ENCODE measurements at regions of chr1 and their contacts with region 1.

Region 1: GRCh38 chr1:161132410-161133219 is at the start of gene DEDD:
- DNase-seq: peak; percentile 97
- H3K4me3 ChIP-seq: peak within 1 kb of the TSS; percentile 90 to 100 (median 94)
- H3K27ac ChIP-seq: peak within 1 kb of the TSS; percentile 85
- H3K4me1 ChIP-seq: peaks cover 26% of the 10 kb centered on the region
- H3K27me3 ChIP-seq: no peaks in the 10 kb centered on the region
- CTCF ChIP-seq: peak; percentile 1 to 4
- POLR2A ChIP-seq: no peak
- total RNA-seq, gene DEDD: 50.2 and 54.9 TPM in 2 replicates

Region 2: GRCh38 chr1:161153679-161154426 is 21.2 kb after region 1 on chr1 and contains the start of gene UFC1:
- CTCF ChIA-PET with region 1: interaction called, 14 read pairs
- POLR2A ChIA-PET with region 1: interaction called, 11 read pairs
- dilution Hi-C with region 1: no loop called
- intact Hi-C with region 1: no loop called
- DNase-seq: peak; percentile 91
- H3K4me3 ChIP-seq: peak within 1 kb of the TSS; percentile 24 to 77 (median 52)
- H3K27ac ChIP-seq: peak within 1 kb of the TSS; percentile 81
- H3K4me1 ChIP-seq: no peaks in the 10 kb centered on the region
- H3K27me3 ChIP-seq: no peaks in the 10 kb centered on the region
- CTCF ChIP-seq: no peak
- POLR2A ChIP-seq: peak; percentile 86
- total RNA-seq, gene UFC1: 102 and 110 TPM in 2 replicates

Region 3: GRCh38 chr1:161314201-161314981 is 181.8 kb after region 1 on chr1 and contains the start of gene SDHC:
- CTCF ChIA-PET with region 1: no interaction called
- POLR2A ChIA-PET with region 1: no interaction called
- dilution Hi-C with region 1: no loop called
- intact Hi-C with region 1: no loop called
- DNase-seq: peak; percentile 92
- H3K4me3 ChIP-seq: peak within 1 kb of the TSS; percentile 45 to 100 (median 80)
- H3K27ac ChIP-seq: peak within 1 kb of the TSS; percentile 93
- H3K4me1 ChIP-seq: peaks cover 9% of the 10 kb centered on the region
- H3K27me3 ChIP-seq: no peaks in the 10 kb centered on the region
- CTCF ChIP-seq: peak; percentile 39 to 64
- POLR2A ChIP-seq: peak; percentile 98
- total RNA-seq, gene SDHC: 136 and 148 TPM in 2 replicates